Calu3 (cell line): ENCODE measurements at regions of chr7 and their contacts with region 1.

Region 1: GRCh38 chr7:31648288-31648687 is 38.7 kb upstream of the PPP1R17 start:
- DNase-seq: no peak
- H3K4me3 Mint-ChIP-seq: no peak overlapping the region
- H3K27ac Mint-ChIP-seq: no peak overlapping the region
- H3K4me1 Mint-ChIP-seq: no peaks in the 10 kb centered on the region
- H3K27me3 Mint-ChIP-seq: no peaks in the 10 kb centered on the region
- CTCF ChIP-seq: peak; percentile 10

Region 2: DNA sequence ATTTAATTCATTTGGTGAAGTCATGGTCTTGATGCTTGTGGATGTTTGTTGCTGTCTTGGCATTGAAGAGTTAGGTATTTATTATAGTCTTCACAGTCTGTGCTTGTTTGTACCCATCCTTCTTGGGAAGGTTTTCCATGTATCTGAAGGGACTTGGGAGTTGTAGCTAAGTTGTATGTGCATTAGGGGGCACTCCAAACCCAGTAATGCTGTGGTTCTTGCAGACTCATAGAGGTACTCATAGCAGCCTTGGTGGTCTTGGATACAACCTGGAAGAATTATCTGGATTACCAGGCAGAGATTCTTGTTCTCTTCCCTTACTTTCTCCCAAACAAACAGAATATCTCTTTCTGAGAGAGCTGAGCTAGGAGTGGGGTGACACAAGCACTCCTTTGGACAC is 502.9 kb before region 1 on chr7:
- CTCF ChIA-PET with region 1: no interaction called
- intact Hi-C with region 1: loop called (anchors 5 kb)
- DNase-seq: no peak
- H3K4me3 Mint-ChIP-seq: no peak overlapping the region
- H3K27ac Mint-ChIP-seq: no peak overlapping the region
- H3K4me1 Mint-ChIP-seq: no peaks in the 10 kb centered on the region
- H3K27me3 Mint-ChIP-seq: peaks cover 95% of the 10 kb centered on the region
- CTCF ChIP-seq: peak; percentile 16

Region 3: DNA sequence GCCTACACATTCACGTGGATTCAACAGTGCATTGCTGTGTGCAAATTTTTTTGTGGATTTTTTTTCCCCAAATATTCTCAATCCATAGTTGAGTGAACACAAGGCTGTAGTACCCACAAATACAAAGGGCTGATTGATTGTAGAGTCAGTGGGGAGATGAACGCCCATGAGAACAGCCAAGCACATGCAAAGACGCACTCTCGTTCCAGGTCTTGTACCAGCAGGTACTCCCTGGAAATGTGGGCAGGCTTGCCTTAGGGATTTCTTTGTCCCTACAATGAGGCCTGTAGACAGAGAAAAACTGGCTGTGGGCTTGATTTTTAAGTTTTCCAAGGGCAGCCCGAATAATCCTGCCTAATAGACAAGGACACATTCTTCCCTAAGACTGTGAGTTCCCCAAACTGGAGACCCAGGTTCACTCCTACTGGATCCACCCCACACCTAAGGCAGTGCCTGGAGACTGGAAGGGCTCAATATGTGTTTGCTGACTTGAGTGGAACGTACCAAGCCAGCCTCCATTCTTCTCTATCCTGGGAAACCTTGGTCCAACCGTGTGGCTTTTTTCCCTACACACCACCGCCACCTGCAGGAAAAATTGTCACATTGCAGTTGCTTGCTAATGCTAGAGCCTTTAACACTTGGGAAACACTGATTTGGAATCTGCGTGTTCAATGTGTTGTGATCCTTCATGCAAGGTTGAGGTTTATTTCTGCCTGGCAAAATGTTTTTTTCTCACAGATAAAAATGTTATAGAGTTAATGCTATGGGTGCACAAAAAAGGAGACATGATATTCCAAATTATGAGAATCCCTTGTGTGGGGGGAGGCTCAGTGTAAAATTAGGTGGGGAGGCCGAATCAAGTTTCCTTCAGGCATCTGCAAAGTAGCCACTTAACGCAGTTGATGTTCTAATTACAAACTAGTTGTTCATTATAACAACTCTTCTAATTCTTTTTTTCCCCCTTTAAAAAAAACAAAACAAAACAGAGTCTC is 88.0 kb after region 1 on chr7:
- CTCF ChIA-PET with region 1: no interaction called
- intact Hi-C with region 1: loop called (anchors 1 kb)
- DNase-seq: peak; percentile 86
- H3K4me3 Mint-ChIP-seq: no peak overlapping the region
- H3K27ac Mint-ChIP-seq: no peak overlapping the region
- H3K4me1 Mint-ChIP-seq: no peaks in the 10 kb centered on the region
- H3K27me3 Mint-ChIP-seq: no peaks in the 10 kb centered on the region
- CTCF ChIP-seq: peak; percentile 94